PC-9 (cell line): ENCODE measurements at regions of chr1 and their contacts with region 1.

Region 1: GRCh38 chr1:34859446-34860200 is at the start of gene SMIM12:
- DNase-seq: peak; percentile 85 to 92
- H3K4me3 ChIP-seq: peak within 1 kb of the TSS; percentile 88
- H3K27ac ChIP-seq: no peak within 1 kb of the TSS
- H3K4me1 ChIP-seq: peaks cover 19% of the 10 kb centered on the region
- H3K27me3 ChIP-seq: no peaks in the 10 kb centered on the region; the same call in 1 of the 2 replicates
- CTCF ChIP-seq: peak; percentile 83
- total RNA-seq, gene SMIM12: 17.4 and 19.3 TPM in 2 replicates

Region 2: GRCh38 chr1:35334485-35334884 is 474.9 kb after region 1 on chr1:
- CTCF ChIA-PET with region 1: no interaction called
- POLR2A ChIA-PET with region 1: no interaction called
- intact Hi-C with region 1: no loop called
- DNase-seq: no peak
- H3K4me3 ChIP-seq: no peak overlapping the region
- H3K27ac ChIP-seq: no peak overlapping the region
- H3K4me1 ChIP-seq: no peaks in the 10 kb centered on the region
- H3K27me3 ChIP-seq: no peaks in the 10 kb centered on the region
- CTCF ChIP-seq: no peak

Region 3: DNA sequence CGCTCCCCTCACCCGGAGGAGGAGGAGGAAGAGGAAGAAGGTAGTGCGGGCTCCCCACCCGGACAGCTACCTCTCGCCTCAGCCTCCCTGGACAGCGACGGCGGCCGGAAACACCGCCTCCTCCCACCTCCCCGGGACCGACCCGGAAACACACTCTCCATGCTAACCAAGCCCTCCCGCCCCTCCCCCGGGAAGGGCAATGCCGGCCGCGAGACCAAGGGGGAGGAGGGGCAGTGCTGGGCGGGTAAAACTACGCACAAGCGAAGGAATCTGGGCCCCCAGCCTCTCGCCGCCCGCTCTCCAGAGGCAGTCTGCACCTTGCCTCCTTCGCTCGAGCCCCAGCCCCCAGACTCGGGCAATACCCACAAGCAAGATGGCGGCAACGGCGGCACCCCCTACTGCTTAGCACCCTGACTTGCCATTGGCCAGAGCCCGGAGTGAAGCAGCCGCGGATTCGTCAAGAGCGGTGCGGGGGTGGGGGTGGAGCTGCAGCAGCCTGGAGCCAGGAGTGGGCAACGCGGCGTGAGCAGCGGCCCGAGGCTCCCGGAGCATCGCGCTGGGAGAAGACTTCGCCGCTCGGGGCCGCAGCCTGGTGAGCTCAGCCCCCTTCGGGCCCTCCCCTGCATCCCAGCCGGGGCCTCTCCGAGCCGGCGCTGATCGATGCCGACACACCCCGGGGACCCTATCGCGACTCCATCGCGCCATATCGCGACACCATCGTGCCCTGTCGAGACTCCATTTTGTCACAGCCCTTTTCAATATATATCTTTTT is 697.9 kb after region 1 on chr1 and contains the starts of genes KIAA0319L and NCDN:
- CTCF ChIA-PET with region 1: interaction called, 6 read pairs
- POLR2A ChIA-PET with region 1: no interaction called
- intact Hi-C with region 1: loop called (anchors 2 kb)
- DNase-seq: peak; percentile 92 to 99
- H3K4me3 ChIP-seq: peak within 1 kb of the TSS; percentile 64
- H3K27ac ChIP-seq: peak within 1 kb of the TSS; percentile 92
- H3K4me1 ChIP-seq: peaks cover 10% of the 10 kb centered on the region
- H3K27me3 ChIP-seq: no peaks in the 10 kb centered on the region
- CTCF ChIP-seq: no peak
- total RNA-seq, gene KIAA0319L: 69.1 and 72.0 TPM in 2 replicates
- total RNA-seq, gene NCDN: 26.6 and 28.0 TPM in 2 replicates